Breast epithelium (tissue), 4 donors: ENCODE measurements at regions of chr2 and their contacts with region 1.

Region 1: DNA sequence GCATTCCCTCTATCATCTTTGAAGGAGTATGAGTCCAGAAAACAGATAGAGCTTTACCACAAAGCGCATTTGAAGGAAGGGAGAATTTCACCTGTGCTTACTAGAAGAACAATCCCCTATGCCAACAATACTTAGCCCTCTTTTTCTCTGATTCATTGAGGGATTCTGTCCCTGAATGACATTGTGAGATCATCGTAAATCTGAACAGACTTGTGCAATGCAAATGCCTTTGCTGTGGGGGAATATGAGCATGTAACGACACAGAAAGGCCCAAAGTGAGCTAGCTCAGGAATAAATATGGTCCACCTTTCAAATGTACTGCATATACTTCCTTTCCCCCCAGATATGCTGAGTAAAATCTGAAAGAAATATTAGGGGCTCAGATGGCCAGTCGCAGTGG is 67.6 kb downstream of the SCN1A start:
- DNase-seq: no peak
- H3K4me3 ChIP-seq: no peak overlapping the region
- H3K27ac ChIP-seq: no peak overlapping the region
- H3K4me1 ChIP-seq: no peaks in the 10 kb centered on the region
- H3K27me3 ChIP-seq: no peaks in the 10 kb centered on the region
- CTCF ChIP-seq: no peak
- POLR2A ChIP-seq: no peak

Region 2: GRCh38 chr2:165003433-165004130 is 1056.6 kb before region 1 on chr2:
- intact Hi-C with region 1: loop called (anchors 5 kb)
- DNase-seq: no peak
- H3K4me3 ChIP-seq: no peak overlapping the region
- H3K27ac ChIP-seq: no peak overlapping the region
- H3K4me1 ChIP-seq: no peaks in the 10 kb centered on the region
- H3K27me3 ChIP-seq: no peaks in the 10 kb centered on the region
- CTCF ChIP-seq: no peak
- POLR2A ChIP-seq: no peak

Region 3: GRCh38 chr2:166610180-166610912 is 550.2 kb after region 1 on chr2:
- intact Hi-C with region 1: no loop called
- DNase-seq: no peak
- H3K4me3 ChIP-seq: peak overlapping the region in 2 of 3 donors; percentile 16 to 31
- H3K27ac ChIP-seq: no peak overlapping the region
- H3K4me1 ChIP-seq: no peaks in the 10 kb centered on the region
- H3K27me3 ChIP-seq: no peaks in the 10 kb centered on the region
- CTCF ChIP-seq: no peak
- POLR2A ChIP-seq: no peak

Region 4: GRCh38 chr2:166792808-166793207 is 732.6 kb after region 1 on chr2:
- intact Hi-C with region 1: no loop called
- DNase-seq: no peak
- H3K4me3 ChIP-seq: no peak overlapping the region
- H3K27ac ChIP-seq: no peak overlapping the region
- H3K4me1 ChIP-seq: no peaks in the 10 kb centered on the region
- H3K27me3 ChIP-seq: no peaks in the 10 kb centered on the region
- CTCF ChIP-seq: no peak
- POLR2A ChIP-seq: no peak